ENCODE measurements at regions of chr18 and their contacts with region 1.

Region 1: DNA sequence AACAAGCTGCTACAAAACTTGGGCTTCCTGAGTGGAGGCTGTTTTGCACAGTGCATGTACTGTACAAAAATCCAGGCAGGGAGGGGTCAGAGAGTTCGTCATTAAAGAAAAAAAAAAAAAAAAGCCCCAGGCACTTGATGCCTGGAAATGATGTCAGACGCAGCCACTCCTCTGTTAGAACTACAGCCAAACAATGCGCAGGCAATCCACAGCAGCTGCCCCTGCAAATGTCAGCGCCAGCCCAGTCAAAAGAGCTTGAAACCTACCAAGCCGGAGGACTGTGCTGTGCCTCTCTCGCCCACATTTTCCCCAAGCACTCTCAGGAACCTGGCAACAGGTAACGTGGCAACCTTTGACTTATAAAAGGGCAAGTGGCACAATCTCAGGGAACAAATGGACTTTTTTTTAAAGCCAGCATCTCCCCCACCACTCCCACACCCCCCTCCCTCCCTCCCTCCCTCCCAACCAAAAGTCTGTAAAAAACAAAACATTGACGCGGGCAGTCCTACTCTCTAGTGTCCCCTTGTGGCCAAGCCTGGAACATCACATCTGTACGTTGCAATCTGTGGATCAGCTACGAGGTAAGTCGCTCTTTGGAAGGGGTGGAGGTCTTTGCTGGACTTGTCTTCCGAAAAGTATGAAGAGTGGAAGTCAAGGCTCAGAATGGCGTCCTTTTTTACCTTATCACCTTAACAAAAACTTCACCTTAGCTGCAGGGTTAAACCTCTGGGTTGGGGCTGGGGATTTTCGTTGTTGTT is 144.1 kb downstream of the TGIF1 start:
- DNase-seq: peak; percentile 86 to 95 (median 91)
- ATAC-seq: peak; percentile 81 to 88 (median 86)
- H3K4me3 ChIP-seq: peak overlapping the region; percentile 29 to 68 (median 54)
- H3K27ac ChIP-seq: peak overlapping the region; percentile 90 to 97 (median 96)
- H3K4me1 ChIP-seq: peaks cover 5 to 55% (median 41%) of the 10 kb centered on the region in 12 donors
- H3K27me3 ChIP-seq: no peaks in the 10 kb centered on the region
- CTCF ChIP-seq: peak; percentile 77 to 97 (median 85)
- POLR2A ChIP-seq: peak in 1 of 2 donors; percentile 33

Region 2: DNA sequence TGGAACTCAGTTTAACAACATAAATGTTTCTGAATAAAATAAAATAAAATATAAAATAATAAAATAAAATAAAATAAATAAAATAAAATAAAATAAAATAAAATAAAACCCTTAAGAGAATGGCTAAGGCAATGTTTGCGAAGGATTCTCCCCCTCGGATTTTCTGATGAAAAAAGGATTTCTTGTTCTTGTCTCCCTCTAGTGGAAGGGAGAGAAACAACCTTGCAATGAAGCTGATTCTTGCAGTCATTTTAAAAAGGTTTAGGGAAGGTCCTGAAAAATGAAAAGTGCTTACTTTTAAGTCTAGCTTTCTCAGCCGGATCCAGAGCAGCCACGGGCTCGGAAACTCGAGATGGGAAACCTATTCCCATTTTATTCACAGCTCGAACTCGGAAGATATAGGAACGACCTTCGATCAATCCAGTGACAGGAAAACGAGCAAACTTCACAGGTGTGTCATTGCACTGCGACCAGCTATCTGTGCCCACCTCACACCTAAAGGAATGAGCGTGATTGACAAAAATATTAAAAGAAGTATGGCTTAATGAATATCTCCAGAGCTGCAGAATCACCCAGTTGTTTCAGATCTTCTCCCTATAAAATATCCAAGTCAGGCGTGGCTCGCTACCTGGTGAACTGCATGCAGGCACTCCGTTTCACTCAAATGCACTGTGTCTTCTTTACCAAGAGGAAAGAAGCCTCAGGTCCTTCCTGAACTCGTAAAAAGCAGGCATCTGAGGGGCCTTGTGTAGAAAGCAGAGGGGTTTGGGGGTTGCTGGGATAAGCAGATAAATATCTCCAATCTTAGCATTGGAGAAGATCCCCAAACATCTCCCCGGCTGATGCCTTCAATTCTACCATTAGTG is 442.5 kb before region 1 on chr18:
- intact Hi-C with region 1: loop called in 1 of 10 experiments (anchors 10 kb)
- DNase-seq: no peak
- ATAC-seq: no peak
- H3K4me3 ChIP-seq: no peak overlapping the region
- H3K27ac ChIP-seq: peak overlapping the region in 1 of 12 donors; percentile 0
- H3K4me1 ChIP-seq: peaks cover 3 to 39% (median 20%) of the 10 kb centered on the region in 12 donors
- H3K27me3 ChIP-seq: no peaks in the 10 kb centered on the region
- CTCF ChIP-seq: peak; percentile 64 to 86 (median 72)
- POLR2A ChIP-seq: no peak

Region 3: GRCh38 chr18:3447895-3448837 is 145.9 kb before region 1 on chr18:
- intact Hi-C with region 1: loop called in 9 of 10 experiments (anchors 2 to 5 kb)
- DNase-seq: peak; percentile 94 to 96 (median 96)
- ATAC-seq: peak; percentile 86 to 92 (median 87)
- H3K4me3 ChIP-seq: peak overlapping the region; percentile 65 to 93 (median 78)
- H3K27ac ChIP-seq: peak overlapping the region; percentile 92 to 100 (median 97)
- H3K4me1 ChIP-seq: peaks cover 0 to 27% (median 13%) of the 10 kb centered on the region in 12 donors
- H3K27me3 ChIP-seq: no peaks in the 10 kb centered on the region
- CTCF ChIP-seq: peak in 4 of 12 donors; percentile 3 to 31 (median 20)
- POLR2A ChIP-seq: peak in 1 of 2 donors; percentile 91

Region 4: GRCh38 chr18:3604498-3605408 is 10.7 kb after region 1 on chr18:
- intact Hi-C with region 1: loop called in 1 of 10 experiments (anchors 1 kb)
- DNase-seq: no peak
- ATAC-seq: peak; percentile 17 to 67 (median 58)
- H3K4me3 ChIP-seq: peak overlapping the region in 10 of 12 donors; percentile 18 to 61 (median 48)
- H3K27ac ChIP-seq: peak overlapping the region; percentile 70 to 94 (median 87)
- H3K4me1 ChIP-seq: peaks cover 7 to 51% (median 30%) of the 10 kb centered on the region in 12 donors
- H3K27me3 ChIP-seq: no peaks in the 10 kb centered on the region
- CTCF ChIP-seq: no peak
- POLR2A ChIP-seq: no peak

Region 5: GRCh38 chr18:3652380-3653262 is 58.5 kb after region 1 on chr18:
- intact Hi-C with region 1: loop called in 2 of 10 experiments (anchors 2 to 5 kb)
- DNase-seq: peak; percentile 27 to 93 (median 44)
- ATAC-seq: peak; percentile 66 to 96 (median 90)
- H3K4me3 ChIP-seq: no peak overlapping the region
- H3K27ac ChIP-seq: peak overlapping the region in 5 of 12 donors; percentile 14 to 69 (median 53)
- H3K4me1 ChIP-seq: peaks cover 0 to 48% (median 5%) of the 10 kb centered on the region in 12 donors
- H3K27me3 ChIP-seq: no peaks in the 10 kb centered on the region
- CTCF ChIP-seq: no peak
- POLR2A ChIP-seq: no peak

Measured in heart left ventricle (tissue), 16 donors.